ENCODE measurements at regions of chr1 and their contacts with region 1.

Region 1: DNA sequence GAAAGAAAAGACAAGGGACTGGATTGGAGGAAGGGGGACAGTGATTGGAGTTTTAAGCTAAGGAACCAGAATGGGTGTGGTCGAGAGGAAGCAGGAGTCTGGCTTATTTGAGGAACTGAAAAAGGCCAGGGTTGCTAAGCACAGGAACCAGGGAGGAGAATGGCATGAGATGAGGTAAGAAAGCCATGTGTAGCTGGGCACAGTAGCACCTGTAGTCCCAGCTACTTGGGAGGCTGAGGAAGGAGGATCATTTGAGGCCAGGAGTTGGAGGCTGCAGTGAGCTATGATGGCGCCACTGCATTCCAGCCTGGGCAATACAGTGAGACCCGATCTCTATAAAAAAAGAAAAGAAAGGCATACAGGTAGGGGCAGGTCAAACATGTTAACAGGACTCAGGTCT is 8.1 kb upstream of the KHDRBS1 start:
- DNase-seq: no peak
- CTCF ChIP-seq: no peak

Region 2: DNA sequence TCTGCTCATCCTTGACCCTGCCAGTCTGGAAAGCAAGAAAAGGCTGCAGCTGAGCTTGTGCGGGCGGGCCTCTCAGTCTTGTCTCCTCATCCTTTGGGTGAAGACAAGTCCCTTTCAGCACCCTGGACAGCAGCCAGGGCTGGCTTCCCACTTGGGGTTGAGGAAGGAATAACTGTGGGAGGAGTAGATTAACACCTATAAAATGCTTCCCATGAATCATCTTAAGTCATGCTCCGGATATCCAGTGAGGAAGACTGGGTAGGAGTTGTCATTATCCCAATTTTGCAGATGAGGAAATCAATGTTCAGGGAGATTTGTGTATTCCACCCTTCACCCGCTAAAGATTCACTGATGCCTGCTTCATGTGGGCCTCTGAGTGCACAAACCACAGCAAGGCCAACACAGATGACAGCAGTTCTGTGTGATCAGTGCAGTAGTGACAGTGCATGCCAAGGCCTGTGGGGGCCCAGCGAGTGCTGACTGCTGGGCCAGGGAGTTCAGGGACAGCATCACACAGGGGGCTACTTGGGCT is 281.6 kb before region 1 on chr1:
- CTCF ChIA-PET with region 1: no interaction called
- POLR2A ChIA-PET with region 1: no interaction called
- DNase-seq: peak; percentile 64
- CTCF ChIP-seq: no peak

Region 3: DNA sequence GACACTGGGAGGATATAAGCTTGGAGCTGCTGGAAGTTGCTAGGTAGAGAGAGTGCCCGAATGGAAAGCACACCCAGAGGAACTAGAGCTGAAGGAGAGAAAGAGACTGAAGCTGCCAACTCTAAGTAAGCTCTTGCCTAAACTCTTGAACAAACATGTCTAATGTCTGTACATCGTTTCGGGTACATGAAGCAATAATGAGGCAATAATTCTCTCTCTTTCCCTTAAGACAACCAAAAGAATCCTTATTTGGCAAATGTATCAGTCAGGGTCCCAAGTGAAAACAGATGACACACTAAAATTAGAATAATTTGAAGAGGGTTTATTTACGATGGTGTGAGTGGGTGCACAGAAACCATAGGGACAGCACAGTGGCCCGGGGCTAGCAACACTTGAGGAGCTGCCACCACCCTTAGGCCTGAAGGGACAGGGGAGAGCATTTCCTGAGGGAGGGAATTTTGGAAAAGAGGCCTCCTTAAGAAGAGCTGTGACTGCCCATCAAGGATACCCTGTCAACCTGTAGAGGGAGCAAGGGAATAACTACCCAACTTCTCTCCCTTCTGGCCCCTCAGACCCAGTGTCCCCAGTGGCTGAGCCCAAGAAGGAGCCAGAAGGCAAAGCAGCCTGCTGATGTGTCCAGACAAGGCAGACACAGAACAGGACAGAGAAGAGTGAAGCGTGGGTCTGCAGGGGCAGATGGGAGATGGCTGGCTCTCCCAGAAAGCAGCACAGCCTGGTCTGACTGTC is 28.0 kb before region 1 on chr1:
- CTCF ChIA-PET with region 1: interaction called, 17 read pairs
- POLR2A ChIA-PET with region 1: no interaction called
- DNase-seq: peak; percentile 45
- CTCF ChIP-seq: peak; percentile 26

Region 4: GRCh38 chr1:31984419-31985347 is 20.8 kb before region 1 on chr1:
- CTCF ChIA-PET with region 1: interaction called, 22 read pairs
- POLR2A ChIA-PET with region 1: no interaction called
- DNase-seq: no peak
- CTCF ChIP-seq: no peak

Measured in GM10248 (cell line).